Caco-2 (cell line): ENCODE measurements at regions of chr1 and their contacts with region 1.

Region 1: DNA sequence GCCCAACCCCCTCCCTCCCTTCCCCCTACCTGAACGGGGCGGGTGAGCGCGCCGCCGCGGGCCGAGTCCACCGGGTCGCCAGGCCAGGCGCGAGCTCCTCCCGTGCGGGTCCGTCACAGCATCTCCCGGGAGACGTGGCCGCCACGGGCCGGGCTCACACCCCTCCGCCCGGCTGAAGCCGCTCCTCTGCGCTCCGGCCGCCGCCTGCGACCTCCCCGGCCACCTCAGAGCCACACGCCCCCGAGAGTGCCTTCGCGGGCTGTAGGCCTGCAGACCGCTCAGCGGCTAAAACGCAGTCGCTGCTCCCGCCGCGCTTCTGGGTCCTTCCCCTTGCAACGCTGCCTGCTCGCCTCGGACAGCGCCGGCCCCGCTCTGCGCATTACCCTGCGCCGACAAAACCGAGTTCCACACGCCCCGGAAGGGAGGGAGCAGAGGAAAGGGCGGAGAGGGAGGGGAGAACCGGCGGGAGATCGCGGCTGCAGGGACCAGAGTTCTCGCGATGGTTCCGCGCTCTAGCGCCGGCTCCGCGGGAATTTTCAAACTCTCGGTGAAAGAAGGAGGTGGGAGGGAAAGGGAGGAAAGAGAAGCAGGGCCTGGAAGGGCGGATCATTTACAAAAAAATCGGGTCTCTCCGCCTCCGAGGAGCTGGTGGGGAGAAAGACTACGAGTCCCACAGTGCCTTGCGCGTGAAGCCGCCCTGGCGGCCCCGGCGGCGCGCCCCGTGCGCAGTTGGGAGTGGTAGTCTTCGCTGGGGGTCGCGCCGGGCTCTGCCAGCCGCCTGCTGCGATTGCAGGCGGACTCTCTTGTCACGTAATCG is at the start of gene AHCTF1:
- DNase-seq: peak; percentile 97
- H3K4me3 ChIP-seq: peak within 1 kb of the TSS; percentile 95
- H3K4me3 Mint-ChIP-seq: peak within 1 kb of the TSS; percentile 95
- H3K27ac Mint-ChIP-seq: peak within 1 kb of the TSS; percentile 95
- H3K4me1 ChIP-seq: peaks cover 10% of the 10 kb centered on the region
- H3K4me1 Mint-ChIP-seq: peaks cover 7% of the 10 kb centered on the region
- H3K27me3 ChIP-seq: no peaks in the 10 kb centered on the region
- H3K27me3 Mint-ChIP-seq: no peaks in the 10 kb centered on the region
- CTCF ChIP-seq: no peak
- total RNA-seq, gene AHCTF1: 42.3 and 48.7 TPM in 2 replicates

Region 2: GRCh38 chr1:246954126-246954525 is 22.4 kb after region 1 on chr1:
- CTCF ChIA-PET with region 1: no interaction called
- POLR2A ChIA-PET with region 1: no interaction called
- intact Hi-C with region 1: no loop called
- DNase-seq: no peak
- H3K4me3 ChIP-seq: no peak overlapping the region
- H3K4me3 Mint-ChIP-seq: no peak overlapping the region
- H3K27ac Mint-ChIP-seq: no peak overlapping the region
- H3K4me1 ChIP-seq: no peaks in the 10 kb centered on the region
- H3K4me1 Mint-ChIP-seq: no peaks in the 10 kb centered on the region
- H3K27me3 ChIP-seq: no peaks in the 10 kb centered on the region
- H3K27me3 Mint-ChIP-seq: no peaks in the 10 kb centered on the region
- CTCF ChIP-seq: no peak

Region 3: GRCh38 chr1:247007511-247008405 is 76.0 kb after region 1 on chr1 and contains the start of gene ZNF695:
- CTCF ChIA-PET with region 1: interaction called, 5 read pairs
- POLR2A ChIA-PET with region 1: no interaction called
- intact Hi-C with region 1: loop called (anchors 1 kb)
- DNase-seq: peak; percentile 98
- H3K4me3 ChIP-seq: peak within 1 kb of the TSS; percentile 97
- H3K4me3 Mint-ChIP-seq: peak within 1 kb of the TSS; percentile 95
- H3K27ac Mint-ChIP-seq: peak within 1 kb of the TSS; percentile 99
- H3K4me1 ChIP-seq: 0 out of 2 replicates have a peak, but pooled peaks cover 5% of the 10 kb centered on the region
- H3K4me1 Mint-ChIP-seq: no peaks in the 10 kb centered on the region
- H3K27me3 ChIP-seq: no peaks in the 10 kb centered on the region
- H3K27me3 Mint-ChIP-seq: no peaks in the 10 kb centered on the region
- CTCF ChIP-seq: no peak
- total RNA-seq, gene ZNF695: 24.7 and 25.2 TPM in 2 replicates